PC-9 (cell line): ENCODE measurements at regions of chr4 and their contacts with region 1.

Region 1: GRCh38 chr4:173168396-173169177 is at the start of gene GALNT7:
- DNase-seq: peak; percentile 57 to 75
- H3K4me3 ChIP-seq: peak within 1 kb of the TSS; percentile 87
- H3K27ac ChIP-seq: peak within 1 kb of the TSS; percentile 91
- H3K4me1 ChIP-seq: peaks cover 14% of the 10 kb centered on the region
- H3K27me3 ChIP-seq: no peaks in the 10 kb centered on the region
- CTCF ChIP-seq: no peak
- total RNA-seq, gene GALNT7: 57.2 and 72.5 TPM in 2 replicates

Region 2: DNA sequence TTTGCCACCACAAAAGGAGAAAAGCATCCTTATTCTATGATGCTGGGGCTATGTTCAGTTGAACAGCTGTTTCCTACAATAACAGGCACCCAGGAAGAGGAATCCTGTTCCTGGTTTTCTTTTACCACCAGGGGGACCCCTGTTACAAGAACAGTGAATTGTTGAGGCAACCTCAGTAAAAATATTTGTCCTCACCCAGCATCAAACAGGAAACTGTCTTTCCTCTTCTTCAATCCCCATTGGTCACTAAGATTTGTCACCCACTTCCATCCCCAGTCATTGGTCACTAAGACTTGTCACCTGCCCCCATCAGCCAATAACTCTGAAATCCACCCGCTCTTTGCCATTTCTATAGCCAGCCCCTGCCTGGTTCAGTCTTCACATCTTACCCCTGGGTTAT is 143.5 kb before region 1 on chr4:
- CTCF ChIA-PET with region 1: no interaction called
- POLR2A ChIA-PET with region 1: no interaction called
- intact Hi-C with region 1: loop called (anchors 2 kb)
- DNase-seq: peak; percentile 43 to 62
- H3K4me3 ChIP-seq: no peak overlapping the region
- H3K27ac ChIP-seq: no peak overlapping the region
- H3K4me1 ChIP-seq: no peaks in the 10 kb centered on the region; the same call in 1 of the 2 replicates
- H3K27me3 ChIP-seq: no peaks in the 10 kb centered on the region
- CTCF ChIP-seq: peak; percentile 67

Region 3: GRCh38 chr4:173181769-173182354 is 13.3 kb after region 1 on chr4:
- CTCF ChIA-PET with region 1: no interaction called
- POLR2A ChIA-PET with region 1: interaction called, 10 read pairs
- intact Hi-C with region 1: no loop called
- DNase-seq: peak in 1 of 2 experiments; percentile 64
- H3K4me3 ChIP-seq: no peak overlapping the region
- H3K27ac ChIP-seq: peak overlapping the region; percentile 86
- H3K4me1 ChIP-seq: peaks cover 49% of the 10 kb centered on the region
- H3K27me3 ChIP-seq: no peaks in the 10 kb centered on the region
- CTCF ChIP-seq: no peak

Region 4: DNA sequence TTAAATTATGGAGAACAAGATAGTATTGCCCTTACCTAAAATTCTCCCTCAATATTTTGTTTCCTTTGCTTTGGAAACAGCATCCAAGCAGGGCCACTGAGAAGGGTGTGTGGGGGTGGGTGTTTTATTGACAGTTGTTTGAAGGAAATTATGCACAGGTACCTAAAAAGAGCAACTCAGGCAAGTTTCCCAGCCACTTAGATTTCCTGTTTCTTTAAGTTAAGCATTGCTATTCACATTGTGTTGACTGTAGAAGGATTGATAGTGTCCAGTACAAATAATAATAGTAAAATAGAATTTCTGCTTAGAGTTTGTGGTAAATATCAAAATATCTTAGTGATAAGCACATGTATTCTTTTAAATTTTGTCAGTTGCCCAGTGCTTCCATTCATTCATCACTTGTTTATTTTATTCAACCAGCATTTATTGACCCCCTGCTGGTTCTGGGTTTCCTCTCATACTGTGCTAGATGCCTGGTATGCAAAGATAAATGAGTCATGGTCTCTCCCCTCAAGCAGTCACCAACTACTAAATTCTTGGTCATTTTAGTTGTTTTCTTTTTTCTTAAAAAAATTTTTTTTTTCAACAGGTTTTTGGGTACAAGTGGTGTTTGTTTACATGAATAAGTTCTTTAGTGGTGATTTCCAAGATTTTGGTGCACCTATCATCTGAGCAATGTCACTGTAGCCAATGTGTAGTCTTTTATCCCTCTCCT is 50.0 kb after region 1 on chr4:
- CTCF ChIA-PET with region 1: interaction called, 15 read pairs
- POLR2A ChIA-PET with region 1: interaction called, 4 read pairs
- intact Hi-C with region 1: loop called (anchors 2 kb)
- DNase-seq: peak; percentile 20 to 76
- H3K4me3 ChIP-seq: no peak overlapping the region
- H3K27ac ChIP-seq: peak overlapping the region; percentile 70
- H3K4me1 ChIP-seq: peaks cover 35% of the 10 kb centered on the region
- H3K27me3 ChIP-seq: no peaks in the 10 kb centered on the region
- CTCF ChIP-seq: no peak

Region 5: DNA sequence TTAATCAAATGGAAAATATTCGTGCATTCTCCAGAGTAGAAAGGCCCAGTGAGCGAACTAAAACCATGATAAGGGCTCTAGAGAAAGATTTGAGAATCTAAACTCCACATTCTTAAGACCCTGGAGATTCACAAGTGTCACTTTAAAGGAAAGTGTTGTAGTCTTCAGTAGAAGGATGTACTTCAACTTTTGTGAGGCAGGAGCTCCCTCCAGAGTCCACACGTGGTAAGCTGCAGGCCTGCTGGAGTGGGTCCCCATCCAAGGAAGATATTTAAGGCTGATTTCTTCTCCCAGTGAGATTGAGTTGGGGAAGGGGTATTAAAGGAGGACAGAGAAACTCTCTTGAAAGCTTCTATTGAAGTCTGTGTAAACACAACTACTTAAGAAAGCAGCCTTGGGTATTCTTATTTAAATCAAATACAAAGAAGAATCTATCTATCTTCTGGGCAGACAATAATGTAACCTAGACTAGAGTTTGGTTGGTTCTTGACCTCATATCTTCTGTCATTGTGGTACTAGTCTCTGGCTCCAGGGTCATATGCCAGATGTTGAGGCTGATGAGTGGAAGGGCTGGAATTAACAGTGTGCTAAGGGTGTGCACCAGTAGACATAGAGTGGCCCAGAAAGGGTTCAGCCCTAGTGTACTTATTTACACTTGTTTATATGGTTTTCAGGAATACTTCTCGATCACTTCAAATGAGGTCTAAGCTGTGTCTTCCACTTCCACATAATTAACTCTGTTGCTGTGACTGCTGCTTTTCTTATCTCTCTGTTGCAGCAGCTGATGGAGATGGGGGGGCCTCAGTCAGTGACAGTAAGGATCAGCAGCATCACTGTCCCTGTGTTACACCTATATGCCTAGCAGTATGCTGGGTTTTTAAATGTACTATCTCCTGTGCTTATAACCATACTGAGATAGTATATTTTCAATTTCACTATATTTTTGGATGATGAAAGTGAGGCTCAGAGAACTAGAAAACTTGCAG is 89.4 kb after region 1 on chr4:
- CTCF ChIA-PET with region 1: no interaction called
- POLR2A ChIA-PET with region 1: interaction called, 16 read pairs
- intact Hi-C with region 1: no loop called
- DNase-seq: peak; percentile 48 to 57
- H3K4me3 ChIP-seq: no peak overlapping the region
- H3K27ac ChIP-seq: no peak overlapping the region
- H3K4me1 ChIP-seq: peaks cover 6% of the 10 kb centered on the region
- H3K27me3 ChIP-seq: no peaks in the 10 kb centered on the region
- CTCF ChIP-seq: peak; percentile 80

Region 6: GRCh38 chr4:173270312-173271027 is 101.9 kb after region 1 on chr4:
- CTCF ChIA-PET with region 1: no interaction called
- POLR2A ChIA-PET with region 1: no interaction called
- intact Hi-C with region 1: no loop called
- DNase-seq: no peak
- H3K4me3 ChIP-seq: no peak overlapping the region
- H3K27ac ChIP-seq: no peak overlapping the region
- H3K4me1 ChIP-seq: no peaks in the 10 kb centered on the region
- H3K27me3 ChIP-seq: no peaks in the 10 kb centered on the region
- CTCF ChIP-seq: no peak

Region 7: GRCh38 chr4:174580597-174580996 is 1412.0 kb after region 1 on chr4:
- CTCF ChIA-PET with region 1: no interaction called
- POLR2A ChIA-PET with region 1: no interaction called
- intact Hi-C with region 1: no loop called
- DNase-seq: no peak
- H3K4me3 ChIP-seq: no peak overlapping the region
- H3K27ac ChIP-seq: no peak overlapping the region
- H3K4me1 ChIP-seq: no peaks in the 10 kb centered on the region
- H3K27me3 ChIP-seq: no peaks in the 10 kb centered on the region
- CTCF ChIP-seq: no peak